CD8-positive, alpha-beta T cell (primary cell): ENCODE measurements at regions of chr7 and their contacts with region 1.

Region 1: GRCh38 chr7:140304191-140304799 is 94.0 kb downstream of the SLC37A3 start:
- DNase-seq: peak in 8 of 9 experiments; percentile 11 to 80 (median 46)
- ATAC-seq: peak; percentile 96
- H3K4me3 ChIP-seq: no peak overlapping the region
- H3K4me3 Mint-ChIP-seq: no peak overlapping the region
- H3K27ac ChIP-seq: peak overlapping the region in 1 of 2 experiments; percentile 17
- H3K27ac Mint-ChIP-seq: peak overlapping the region; percentile 87
- H3K4me1 ChIP-seq: peaks cover 5% of the 10 kb centered on the region
- H3K4me1 Mint-ChIP-seq: peaks cover 5% of the 10 kb centered on the region
- H3K27me3 ChIP-seq: no peaks in the 10 kb centered on the region
- H3K27me3 Mint-ChIP-seq: no peaks in the 10 kb centered on the region
- CTCF ChIP-seq: peak; percentile 60

Region 2: GRCh38 chr7:140141256-140141655 is 163.0 kb before region 1 on chr7:
- CTCF ChIA-PET with region 1: interaction called, 10 read pairs
- POLR2A ChIA-PET with region 1: interaction called, 3 read pairs
- intact Hi-C with region 1: no loop called
- DNase-seq: no peak
- ATAC-seq: no peak
- H3K4me3 ChIP-seq: no peak overlapping the region
- H3K4me3 Mint-ChIP-seq: no peak overlapping the region
- H3K27ac ChIP-seq: no peak overlapping the region
- H3K27ac Mint-ChIP-seq: no peak overlapping the region
- H3K4me1 ChIP-seq: peaks cover 12% of the 10 kb centered on the region
- H3K4me1 Mint-ChIP-seq: peaks cover 51% of the 10 kb centered on the region
- H3K27me3 ChIP-seq: no peaks in the 10 kb centered on the region
- H3K27me3 Mint-ChIP-seq: no peaks in the 10 kb centered on the region
- CTCF ChIP-seq: no peak

Region 3: DNA sequence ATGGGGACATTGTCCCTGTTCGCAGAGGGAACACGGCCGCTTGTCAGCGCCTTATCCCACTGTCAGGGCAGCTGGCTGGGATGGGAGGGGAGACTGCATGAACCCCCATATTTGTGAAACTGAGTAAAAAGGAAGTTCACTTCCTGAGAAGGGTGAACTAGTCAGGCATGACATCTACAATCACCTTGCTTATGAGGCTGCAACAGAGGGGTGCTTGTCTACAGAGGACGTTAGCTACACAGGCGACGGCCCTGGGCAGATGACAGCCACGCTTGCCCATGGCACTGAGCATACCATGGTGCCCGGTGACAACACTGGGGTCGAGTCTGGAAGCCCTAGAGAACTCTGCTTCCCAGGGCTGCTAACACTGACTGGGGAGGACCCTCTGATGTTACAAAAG is 81.5 kb before region 1 on chr7:
- CTCF ChIA-PET with region 1: interaction called, 35 read pairs
- POLR2A ChIA-PET with region 1: no interaction called
- intact Hi-C with region 1: no loop called
- DNase-seq: no peak
- ATAC-seq: no peak
- H3K4me3 ChIP-seq: no peak overlapping the region
- H3K4me3 Mint-ChIP-seq: no peak overlapping the region
- H3K27ac ChIP-seq: no peak overlapping the region
- H3K27ac Mint-ChIP-seq: peak overlapping the region; percentile 30
- H3K4me1 ChIP-seq: peaks cover 35% of the 10 kb centered on the region
- H3K4me1 Mint-ChIP-seq: peaks cover 35% of the 10 kb centered on the region
- H3K27me3 ChIP-seq: no peaks in the 10 kb centered on the region
- H3K27me3 Mint-ChIP-seq: no peaks in the 10 kb centered on the region
- CTCF ChIP-seq: no peak

Region 4: DNA sequence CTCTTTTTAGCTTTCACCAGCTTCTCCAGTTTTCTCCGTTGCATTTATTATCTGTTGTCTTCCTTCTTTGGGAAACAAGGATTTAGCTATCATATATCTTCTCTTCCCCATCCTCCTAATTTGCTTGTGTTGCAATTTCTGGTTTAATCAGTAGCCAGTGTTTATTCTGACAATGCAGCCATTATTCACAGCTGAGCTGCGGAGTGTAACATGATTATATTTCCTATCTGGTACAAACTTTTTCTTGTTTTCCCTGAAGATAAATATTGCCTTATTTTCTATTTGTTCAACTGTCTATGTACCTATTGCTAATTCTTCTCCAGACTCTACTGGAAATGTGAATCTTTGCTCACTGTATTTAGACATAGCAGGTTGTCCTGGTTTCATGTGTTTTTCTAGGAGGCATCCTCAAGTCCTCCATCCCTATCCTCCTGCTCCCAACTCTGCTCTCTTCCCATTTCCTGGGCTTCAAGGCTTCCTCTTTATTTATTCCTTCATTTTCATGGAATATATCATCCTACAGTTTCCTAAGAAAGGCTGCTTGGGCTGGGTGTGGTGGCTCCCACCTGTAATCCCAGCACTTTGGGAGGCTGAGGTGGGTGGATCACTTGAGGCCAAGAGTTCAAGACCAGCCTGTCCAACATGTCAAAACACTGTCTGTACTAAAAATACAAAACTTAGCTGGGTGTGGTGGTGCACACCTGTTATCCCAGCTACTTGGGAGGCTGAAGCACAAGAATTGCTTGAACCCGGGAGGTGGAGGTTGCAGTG is 55.1 kb before region 1 on chr7:
- CTCF ChIA-PET with region 1: interaction called, 10 read pairs
- POLR2A ChIA-PET with region 1: no interaction called
- intact Hi-C with region 1: loop called in 1 of 2 experiments (anchors 5 kb)
- DNase-seq: no peak
- ATAC-seq: no peak
- H3K4me3 ChIP-seq: no peak overlapping the region
- H3K4me3 Mint-ChIP-seq: no peak overlapping the region
- H3K27ac ChIP-seq: no peak overlapping the region
- H3K27ac Mint-ChIP-seq: no peak overlapping the region
- H3K4me1 ChIP-seq: peaks cover 12% of the 10 kb centered on the region
- H3K4me1 Mint-ChIP-seq: peaks cover 14% of the 10 kb centered on the region
- H3K27me3 ChIP-seq: no peaks in the 10 kb centered on the region
- H3K27me3 Mint-ChIP-seq: no peaks in the 10 kb centered on the region
- CTCF ChIP-seq: no peak

Region 5: DNA sequence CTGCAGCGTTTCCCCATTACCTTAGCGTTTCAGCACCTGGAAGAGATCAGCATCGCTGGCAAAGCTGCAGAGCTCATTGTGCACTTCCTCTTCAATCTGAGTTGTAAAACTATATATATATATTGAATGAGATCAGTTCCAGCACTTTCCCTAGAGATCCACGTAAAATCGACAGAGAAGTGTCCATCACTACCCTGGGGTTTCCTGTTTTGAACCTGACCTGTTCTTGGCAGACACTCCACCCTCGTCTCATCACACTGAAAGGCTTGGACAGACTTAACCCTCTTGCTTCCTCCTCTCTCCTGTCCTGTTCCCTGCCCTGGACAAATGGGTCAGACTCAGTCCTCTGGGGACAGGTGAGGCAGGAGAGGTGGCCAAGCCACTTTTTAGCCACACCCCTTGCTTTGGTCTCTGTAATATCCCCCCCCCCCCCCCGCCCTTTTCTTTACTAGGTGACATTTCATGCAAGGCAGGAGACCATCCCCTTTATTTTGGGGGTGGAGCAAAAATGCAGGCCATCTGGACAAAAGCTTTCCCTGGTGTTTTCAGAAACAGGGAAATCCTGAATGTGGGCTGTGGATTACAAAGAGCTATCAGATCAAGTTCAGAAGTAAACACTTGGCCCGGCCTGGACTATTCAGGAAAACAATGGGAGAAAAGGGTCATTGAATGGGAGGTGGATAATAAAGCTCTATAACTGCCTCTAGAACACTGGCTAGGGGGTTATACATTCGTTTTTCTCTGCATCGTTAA is 43.8 kb before region 1 on chr7:
- CTCF ChIA-PET with region 1: interaction called, 7 read pairs
- POLR2A ChIA-PET with region 1: interaction called, 5 read pairs
- intact Hi-C with region 1: loop called in 1 of 2 experiments (anchors 5 kb)
- DNase-seq: no peak
- ATAC-seq: no peak
- H3K4me3 ChIP-seq: no peak overlapping the region
- H3K4me3 Mint-ChIP-seq: no peak overlapping the region
- H3K27ac ChIP-seq: no peak overlapping the region
- H3K27ac Mint-ChIP-seq: peak overlapping the region; percentile 32
- H3K4me1 ChIP-seq: peaks cover 47% of the 10 kb centered on the region
- H3K4me1 Mint-ChIP-seq: peaks cover 51% of the 10 kb centered on the region
- H3K27me3 ChIP-seq: no peaks in the 10 kb centered on the region
- H3K27me3 Mint-ChIP-seq: no peaks in the 10 kb centered on the region
- CTCF ChIP-seq: no peak

Region 6: GRCh38 chr7:140275069-140275965 is 29.0 kb before region 1 on chr7:
- CTCF ChIA-PET with region 1: interaction called, 16 read pairs
- POLR2A ChIA-PET with region 1: no interaction called
- intact Hi-C with region 1: no loop called
- DNase-seq: no peak
- ATAC-seq: no peak
- H3K4me3 ChIP-seq: no peak overlapping the region
- H3K4me3 Mint-ChIP-seq: no peak overlapping the region
- H3K27ac ChIP-seq: no peak overlapping the region
- H3K27ac Mint-ChIP-seq: no peak overlapping the region
- H3K4me1 ChIP-seq: no peaks in the 10 kb centered on the region
- H3K4me1 Mint-ChIP-seq: peaks cover 2% of the 10 kb centered on the region
- H3K27me3 ChIP-seq: no peaks in the 10 kb centered on the region
- H3K27me3 Mint-ChIP-seq: no peaks in the 10 kb centered on the region
- CTCF ChIP-seq: no peak

Region 7: DNA sequence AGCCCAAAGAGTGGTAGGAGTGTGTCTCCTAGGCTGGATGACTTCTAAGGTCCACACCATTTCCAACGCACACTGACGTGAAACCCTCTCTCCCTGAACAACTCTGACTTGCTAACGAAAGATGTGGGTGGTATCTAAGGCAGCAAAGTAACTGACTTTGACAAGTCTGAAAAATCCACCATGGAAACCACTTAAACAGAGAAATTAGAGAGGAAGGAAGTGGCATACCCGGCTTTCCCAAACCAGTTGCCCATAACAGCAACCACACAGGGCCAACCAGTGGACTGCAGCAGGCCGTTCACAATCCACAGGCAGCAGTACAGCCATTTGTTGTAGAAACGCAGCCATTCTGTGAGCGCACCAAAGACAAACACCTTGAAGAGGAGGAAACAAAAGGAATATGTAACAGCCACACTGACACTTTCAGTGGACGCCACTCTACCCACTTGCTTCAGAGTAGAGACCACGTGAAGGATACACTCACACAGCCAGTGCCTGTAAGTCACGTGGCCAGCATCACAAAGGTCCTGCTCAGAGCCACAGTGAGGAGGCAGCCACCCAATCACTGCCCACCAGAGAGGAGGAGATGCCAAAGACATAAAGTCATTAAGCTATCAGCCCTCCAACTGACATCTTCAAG is 54.2 kb after region 1 on chr7:
- CTCF ChIA-PET with region 1: no interaction called
- POLR2A ChIA-PET with region 1: no interaction called
- intact Hi-C with region 1: no loop called
- DNase-seq: peak in 6 of 9 experiments; percentile 2 to 65 (median 31)
- ATAC-seq: peak; percentile 60
- H3K4me3 ChIP-seq: peak overlapping the region in 1 of 2 experiments; percentile 37
- H3K4me3 Mint-ChIP-seq: peak overlapping the region; percentile 87
- H3K27ac ChIP-seq: peak overlapping the region in 1 of 2 experiments; percentile 67
- H3K27ac Mint-ChIP-seq: peak overlapping the region; percentile 91
- H3K4me1 ChIP-seq: peaks cover 4% of the 10 kb centered on the region
- H3K4me1 Mint-ChIP-seq: peaks cover 18% of the 10 kb centered on the region
- H3K27me3 ChIP-seq: no peaks in the 10 kb centered on the region
- H3K27me3 Mint-ChIP-seq: no peaks in the 10 kb centered on the region
- CTCF ChIP-seq: no peak